CD4-positive, alpha-beta T cell (primary cell): ENCODE measurements at regions of chr17 and their contacts with region 1.

Region 1: GRCh38 chr17:44123356-44124117 is at the start of gene HDAC5:
- DNase-seq: peak; percentile 93 to 99 (median 96)
- ATAC-seq: peak; percentile 94
- H3K4me3 ChIP-seq: peak within 1 kb of the TSS; percentile 73
- H3K4me3 Mint-ChIP-seq: peak within 1 kb of the TSS; percentile 99
- H3K27ac ChIP-seq: peak within 1 kb of the TSS; percentile 57 to 83
- H3K27ac Mint-ChIP-seq: peak within 1 kb of the TSS; percentile 99
- H3K4me1 ChIP-seq: peaks cover 52% of the 10 kb centered on the region
- H3K4me1 Mint-ChIP-seq: peaks cover 47% of the 10 kb centered on the region
- H3K27me3 ChIP-seq: no peaks in the 10 kb centered on the region
- H3K27me3 Mint-ChIP-seq: no peaks in the 10 kb centered on the region
- CTCF ChIP-seq: peak; percentile 66
- total RNA-seq, gene HDAC5: 92.0 to 92.5 TPM

Region 2: DNA sequence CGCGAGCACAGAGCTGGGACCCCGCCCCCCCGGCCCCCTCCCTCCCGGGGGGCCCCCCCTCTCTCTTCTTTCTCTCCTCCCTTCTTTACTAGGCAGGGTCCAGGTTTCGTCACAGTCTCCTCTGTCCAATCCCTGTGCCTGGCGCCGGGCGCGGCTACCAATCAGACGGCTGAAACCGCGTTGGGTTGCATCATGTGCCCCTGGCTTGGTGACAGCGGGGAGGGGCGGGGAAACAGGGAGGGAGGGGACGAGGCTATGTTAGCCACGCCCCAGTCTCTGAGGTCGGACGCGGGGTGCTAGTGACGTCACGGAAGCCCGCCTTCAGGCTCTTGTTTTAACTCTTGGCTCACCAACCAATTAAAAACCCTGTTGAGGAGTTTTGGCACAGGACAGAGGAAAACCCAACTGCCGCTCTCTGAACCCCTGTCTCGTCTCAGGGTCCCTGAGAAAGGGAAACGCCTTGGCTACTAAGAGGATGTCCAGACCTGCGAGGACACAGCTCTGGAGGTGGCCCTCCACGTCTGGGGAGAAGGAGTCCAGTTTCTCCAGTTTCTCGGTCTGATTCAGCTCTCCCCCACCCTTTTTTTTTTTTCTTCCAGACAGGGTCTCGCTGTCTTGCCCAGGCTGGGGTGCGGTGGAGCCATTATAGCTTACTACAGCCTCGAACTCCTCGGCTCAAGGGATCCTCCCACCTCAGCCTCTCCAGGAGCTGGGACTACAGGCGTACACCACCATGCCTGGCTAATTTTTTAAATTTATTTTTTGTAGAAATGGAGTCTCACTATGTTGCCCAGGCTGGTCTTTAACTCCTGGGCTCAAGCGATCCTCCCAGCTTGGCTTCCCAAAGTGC is 1446.3 kb before region 1 on chr17:
- CTCF ChIA-PET with region 1: no interaction called
- POLR2A ChIA-PET with region 1: no interaction called
- intact Hi-C with region 1: loop called in 1 of 2 experiments (anchors 10 kb)
- DNase-seq: peak; percentile 92 to 99 (median 97)
- ATAC-seq: peak; percentile 85
- H3K4me3 ChIP-seq: peak overlapping the region; percentile 61
- H3K4me3 Mint-ChIP-seq: peak overlapping the region; percentile 93
- H3K27ac ChIP-seq: no peak overlapping the region
- H3K27ac Mint-ChIP-seq: peak overlapping the region; percentile 79
- H3K4me1 ChIP-seq: peaks cover 79% of the 10 kb centered on the region
- H3K4me1 Mint-ChIP-seq: peaks cover 57% of the 10 kb centered on the region
- H3K27me3 ChIP-seq: peaks cover 58 to 62% of the 10 kb centered on the region in 2 experiments
- H3K27me3 Mint-ChIP-seq: peaks cover 55% of the 10 kb centered on the region
- CTCF ChIP-seq: no peak

Region 3: DNA sequence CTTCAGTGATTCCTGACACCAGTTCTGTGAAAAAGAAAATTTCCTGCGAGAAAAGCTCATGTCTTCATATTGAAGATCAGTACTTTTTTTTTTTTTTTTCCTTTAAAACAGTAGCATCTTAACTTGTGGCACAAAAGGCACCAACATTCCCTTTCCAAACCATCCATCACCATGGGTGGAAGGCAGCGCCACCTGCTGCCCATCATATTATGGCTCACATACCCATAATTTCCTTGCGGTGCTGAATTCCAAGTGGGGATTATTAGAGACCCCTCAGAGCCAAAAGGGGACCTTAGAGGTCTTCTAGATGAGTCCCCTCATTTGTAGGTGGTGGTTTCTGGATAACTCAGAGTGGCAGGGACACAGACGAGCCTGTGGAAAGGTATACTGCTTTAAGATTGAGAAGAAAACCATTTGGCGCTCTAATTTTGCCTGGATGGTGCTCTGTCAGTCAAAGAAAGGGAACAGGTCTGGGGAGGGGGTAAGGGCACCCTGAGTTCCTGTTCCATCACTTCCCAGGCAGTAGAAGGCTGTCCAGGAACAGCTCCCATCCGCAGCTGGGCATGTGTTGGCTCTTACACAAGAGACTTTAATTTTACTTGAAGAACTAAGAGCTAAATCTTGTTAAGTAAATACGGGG is 357.0 kb before region 1 on chr17:
- CTCF ChIA-PET with region 1: no interaction called
- POLR2A ChIA-PET with region 1: no interaction called
- intact Hi-C with region 1: no loop called
- DNase-seq: peak; percentile 23 to 74 (median 38)
- ATAC-seq: no peak
- H3K4me3 ChIP-seq: no peak overlapping the region
- H3K4me3 Mint-ChIP-seq: no peak overlapping the region
- H3K27ac ChIP-seq: no peak overlapping the region
- H3K27ac Mint-ChIP-seq: no peak overlapping the region
- H3K4me1 ChIP-seq: no peaks in the 10 kb centered on the region
- H3K4me1 Mint-ChIP-seq: no peaks in the 10 kb centered on the region
- H3K27me3 ChIP-seq: no peaks in the 10 kb centered on the region
- H3K27me3 Mint-ChIP-seq: no peaks in the 10 kb centered on the region
- CTCF ChIP-seq: peak; percentile 99

Region 4: GRCh38 chr17:44070455-44071197 is 52.9 kb before region 1 on chr17 and contains the start of gene G6PC3:
- CTCF ChIA-PET with region 1: no interaction called
- POLR2A ChIA-PET with region 1: interaction called, 15 read pairs
- intact Hi-C with region 1: loop called (anchors 1 to 5 kb)
- DNase-seq: peak; percentile 34 to 88 (median 60)
- ATAC-seq: peak; percentile 32
- H3K4me3 ChIP-seq: peak within 1 kb of the TSS; percentile 77
- H3K4me3 Mint-ChIP-seq: peak within 1 kb of the TSS; percentile 95
- H3K27ac ChIP-seq: peak within 1 kb of the TSS; percentile 61 to 71
- H3K27ac Mint-ChIP-seq: peak within 1 kb of the TSS; percentile 91
- H3K4me1 ChIP-seq: peaks cover 37% of the 10 kb centered on the region
- H3K4me1 Mint-ChIP-seq: peaks cover 49% of the 10 kb centered on the region
- H3K27me3 ChIP-seq: no peaks in the 10 kb centered on the region
- H3K27me3 Mint-ChIP-seq: no peaks in the 10 kb centered on the region
- CTCF ChIP-seq: no peak
- total RNA-seq, gene G6PC3: 5.6 to 5.8 TPM

Region 5: GRCh38 chr17:44141717-44142285 is 18.3 kb after region 1 on chr17 and contains the start of gene HROB:
- CTCF ChIA-PET with region 1: interaction called, 12 read pairs
- POLR2A ChIA-PET with region 1: interaction called, 3 read pairs
- intact Hi-C with region 1: loop called (anchors 1 kb)
- DNase-seq: peak; percentile 95 to 100 (median 98)
- ATAC-seq: peak; percentile 93
- H3K4me3 ChIP-seq: peak within 1 kb of the TSS; percentile 59
- H3K4me3 Mint-ChIP-seq: peak within 1 kb of the TSS; percentile 84
- H3K27ac ChIP-seq: peak within 1 kb of the TSS; percentile 41 to 59
- H3K27ac Mint-ChIP-seq: peak within 1 kb of the TSS; percentile 68
- H3K4me1 ChIP-seq: peaks cover 19% of the 10 kb centered on the region
- H3K4me1 Mint-ChIP-seq: peaks cover 7% of the 10 kb centered on the region
- H3K27me3 ChIP-seq: peaks cover 8 to 12% of the 10 kb centered on the region in 2 experiments
- H3K27me3 Mint-ChIP-seq: peaks cover 17% of the 10 kb centered on the region
- CTCF ChIP-seq: peak; percentile 86
- total RNA-seq, gene HROB: 1.6 TPM

Region 6: DNA sequence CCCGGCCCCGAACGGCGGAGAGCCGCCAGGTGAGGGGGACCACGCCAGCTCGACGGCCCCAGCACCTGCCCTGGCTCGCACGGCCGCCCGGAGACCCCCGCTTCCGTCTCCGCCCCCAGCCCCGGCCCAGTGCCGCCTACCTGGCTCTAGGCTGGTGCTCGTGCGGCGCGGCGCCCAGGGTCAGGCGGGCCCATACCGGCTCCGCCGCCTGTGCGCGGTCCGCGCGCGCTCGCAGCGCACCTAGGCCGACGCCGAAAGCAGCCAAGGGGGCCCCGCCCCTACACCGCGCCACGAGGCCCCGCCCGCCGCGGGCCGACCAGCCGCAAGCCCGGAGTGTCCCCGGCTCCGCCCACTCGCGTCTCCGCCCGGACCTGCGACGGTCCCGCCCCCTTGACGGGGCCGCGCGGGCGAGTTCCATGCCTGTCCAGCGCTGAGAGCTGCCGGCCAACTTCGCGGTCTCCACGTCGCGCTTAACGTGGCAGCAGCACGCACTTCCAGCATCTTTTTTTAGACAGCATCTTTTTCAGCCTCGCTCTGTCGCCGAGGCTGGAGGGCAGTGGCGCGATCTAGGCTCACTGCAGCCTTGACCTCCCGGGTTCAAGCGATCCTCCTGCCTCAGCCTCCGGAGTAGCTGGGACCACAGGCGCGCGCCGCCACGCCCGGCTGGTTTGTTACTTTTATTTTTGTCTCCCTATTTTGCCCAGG is 201.2 kb after region 1 on chr17 and contains the start of gene SLC25A39:
- CTCF ChIA-PET with region 1: no interaction called
- POLR2A ChIA-PET with region 1: interaction called, 15 read pairs
- intact Hi-C with region 1: loop called in 1 of 2 experiments (anchors 10 kb)
- DNase-seq: peak; percentile 87 to 97 (median 94)
- ATAC-seq: peak; percentile 69
- H3K4me3 ChIP-seq: peak within 1 kb of the TSS; percentile 85
- H3K4me3 Mint-ChIP-seq: peak within 1 kb of the TSS; percentile 95
- H3K27ac ChIP-seq: peak within 1 kb of the TSS; percentile 83 to 90
- H3K27ac Mint-ChIP-seq: peak within 1 kb of the TSS; percentile 96
- H3K4me1 ChIP-seq: peaks cover 44% of the 10 kb centered on the region
- H3K4me1 Mint-ChIP-seq: peaks cover 27% of the 10 kb centered on the region
- H3K27me3 ChIP-seq: no peaks in the 10 kb centered on the region
- H3K27me3 Mint-ChIP-seq: no peaks in the 10 kb centered on the region
- CTCF ChIP-seq: no peak
- total RNA-seq, gene SLC25A39: 55.5 to 65.5 TPM